ENCODE measurements at regions of chr5 and their contacts with region 1.

Region 1: DNA sequence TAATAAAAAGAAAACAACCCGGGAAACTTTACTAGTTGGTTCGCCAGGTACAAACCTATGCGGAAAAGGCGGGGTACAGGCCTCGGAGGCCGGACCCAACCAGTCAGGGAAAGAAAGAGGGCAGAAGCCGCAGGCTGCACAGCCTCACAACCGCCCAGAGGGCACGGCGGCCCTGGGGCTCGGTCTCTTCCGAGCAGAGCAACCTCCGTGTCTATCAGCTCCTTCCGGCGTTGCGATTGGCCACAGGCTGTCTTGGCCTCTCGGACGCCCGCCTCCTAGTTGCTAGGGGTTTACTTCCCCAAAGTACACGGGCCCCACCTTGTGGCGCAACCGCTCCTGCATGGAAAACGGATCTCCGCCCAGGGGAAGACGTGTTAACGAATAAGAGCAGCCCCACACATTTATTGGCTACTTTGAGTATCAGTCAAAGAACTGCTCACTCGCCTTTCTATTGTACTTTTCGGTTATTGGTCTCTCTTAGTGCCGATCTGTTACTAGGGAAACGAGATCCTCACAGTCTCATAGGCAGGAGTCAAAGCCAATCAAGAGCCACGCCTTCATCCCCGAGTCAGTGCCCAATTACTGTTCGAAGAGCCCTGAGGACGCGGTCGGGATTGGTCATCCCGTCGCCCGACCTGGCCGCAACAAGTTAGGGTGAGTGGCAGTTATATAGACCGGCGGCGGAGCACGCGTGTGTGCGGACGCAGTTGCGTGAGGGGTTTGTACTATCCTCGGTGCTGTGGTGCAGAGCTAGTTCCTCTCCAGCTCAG is at the start of gene G3BP1:
- DNase-seq: peak; percentile 100
- H3K4me3 Mint-ChIP-seq: peak within 1 kb of the TSS; percentile 81
- H3K27ac Mint-ChIP-seq: peak within 1 kb of the TSS; percentile 69
- H3K4me1 Mint-ChIP-seq: peaks cover 35% of the 10 kb centered on the region
- H3K27me3 Mint-ChIP-seq: no peaks in the 10 kb centered on the region
- total RNA-seq, gene G3BP1: 198 to 210 TPM

Region 2: GRCh38 chr5:151447174-151448037 is 324.0 kb before region 1 on chr5 and contains the start of gene SLC36A1:
- CTCF ChIA-PET with region 1: interaction called, 17 read pairs
- POLR2A ChIA-PET with region 1: interaction called, 24 read pairs
- DNase-seq: peak; percentile 93
- H3K4me3 Mint-ChIP-seq: peak within 1 kb of the TSS; percentile 95
- H3K27ac Mint-ChIP-seq: peak within 1 kb of the TSS; percentile 77
- H3K4me1 Mint-ChIP-seq: peaks cover 25% of the 10 kb centered on the region
- H3K27me3 Mint-ChIP-seq: peaks cover 29% of the 10 kb centered on the region
- total RNA-seq, gene SLC36A1: 5.4 to 6.4 TPM

Region 3: GRCh38 chr5:151659001-151659754 is 112.3 kb before region 1 on chr5:
- CTCF ChIA-PET with region 1: interaction called, 36 read pairs
- POLR2A ChIA-PET with region 1: interaction called, 16 read pairs
- DNase-seq: peak; percentile 82
- H3K4me3 Mint-ChIP-seq: no peak overlapping the region
- H3K27ac Mint-ChIP-seq: no peak overlapping the region
- H3K4me1 Mint-ChIP-seq: peaks cover 19% of the 10 kb centered on the region
- H3K27me3 Mint-ChIP-seq: peaks cover 11% of the 10 kb centered on the region

Region 4: DNA sequence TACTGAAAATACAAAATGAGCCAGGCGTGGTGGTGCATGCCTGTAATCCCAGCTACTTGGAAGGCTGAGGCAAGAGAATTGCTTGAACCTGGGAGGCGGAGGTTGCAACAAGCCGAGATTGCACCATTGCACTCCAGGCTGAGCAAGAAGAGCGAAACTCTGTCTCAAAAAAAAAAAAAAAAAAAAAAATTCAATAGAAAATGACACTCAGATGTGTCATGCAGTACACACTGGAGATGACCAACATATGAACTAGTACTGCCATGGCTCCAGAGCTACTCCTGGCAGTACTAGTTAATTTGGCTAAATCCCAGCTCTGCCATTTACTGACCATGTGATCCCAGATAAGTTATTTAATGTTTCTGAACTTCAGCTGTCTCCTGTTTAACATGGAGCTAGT is 20.4 kb before region 1 on chr5:
- CTCF ChIA-PET with region 1: interaction called, 22 read pairs
- POLR2A ChIA-PET with region 1: interaction called, 184 read pairs
- DNase-seq: no peak
- H3K4me3 Mint-ChIP-seq: no peak overlapping the region
- H3K27ac Mint-ChIP-seq: peak overlapping the region; percentile 1
- H3K4me1 Mint-ChIP-seq: peaks cover 59% of the 10 kb centered on the region
- H3K27me3 Mint-ChIP-seq: no peaks in the 10 kb centered on the region

Region 5: GRCh38 chr5:151799407-151799806 is 28.0 kb after region 1 on chr5:
- CTCF ChIA-PET with region 1: interaction called, 4 read pairs
- POLR2A ChIA-PET with region 1: interaction called, 24 read pairs
- DNase-seq: peak; percentile 21
- H3K4me3 Mint-ChIP-seq: no peak overlapping the region
- H3K27ac Mint-ChIP-seq: peak overlapping the region; percentile 57
- H3K4me1 Mint-ChIP-seq: peaks cover 28% of the 10 kb centered on the region
- H3K27me3 Mint-ChIP-seq: no peaks in the 10 kb centered on the region